Activated CD4-positive, alpha-beta T cell treated with anti-CD3 and anti-CD28 coated beads for 36 hours (primary cell): ENCODE measurements at regions of chr9 and their contacts with region 1.

Region 1: DNA sequence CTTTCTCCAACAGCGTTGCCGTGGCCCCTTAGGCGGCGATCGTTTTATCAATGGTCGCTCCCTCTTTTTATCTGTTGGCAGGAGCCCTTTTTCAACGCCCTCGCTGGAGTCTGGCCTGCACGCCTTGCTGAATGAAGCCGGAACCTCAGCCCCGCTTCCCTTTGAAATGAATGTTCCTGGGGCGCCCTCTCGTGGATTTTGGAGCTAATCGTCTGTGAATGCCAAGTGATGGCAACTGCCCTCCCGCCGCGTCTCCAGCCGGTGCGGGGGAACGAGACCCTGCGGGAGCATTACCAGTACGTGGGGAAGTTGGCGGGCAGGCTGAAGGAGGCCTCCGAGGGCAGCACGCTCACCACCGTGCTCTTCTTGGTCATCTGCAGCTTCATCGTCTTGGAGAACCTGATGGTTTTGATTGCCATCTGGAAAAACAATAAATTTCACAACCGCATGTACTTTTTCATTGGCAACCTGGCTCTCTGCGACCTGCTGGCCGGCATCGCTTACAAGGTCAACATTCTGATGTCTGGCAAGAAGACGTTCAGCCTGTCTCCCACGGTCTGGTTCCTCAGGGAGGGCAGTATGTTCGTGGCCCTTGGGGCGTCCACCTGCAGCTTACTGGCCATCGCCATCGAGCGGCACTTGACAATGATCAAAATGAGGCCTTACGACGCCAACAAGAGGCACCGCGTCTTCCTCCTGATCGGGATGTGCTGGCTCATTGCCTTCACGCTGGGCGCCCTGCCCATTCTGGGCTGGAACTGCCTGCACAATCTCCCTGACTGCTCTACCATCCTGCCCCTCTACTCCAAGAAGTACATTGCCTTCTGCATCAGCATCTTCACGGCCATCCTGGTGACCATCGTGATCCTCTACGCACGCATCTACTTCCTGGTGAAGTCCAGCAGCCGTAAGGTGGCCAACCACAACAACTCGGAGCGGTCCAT is 10.0 kb downstream of the S1PR3 start:
- DNase-seq: peak; percentile 92
- ATAC-seq: peak; percentile 71
- H3K4me3 Mint-ChIP-seq: no peak overlapping the region
- H3K27ac Mint-ChIP-seq: no peak overlapping the region
- H3K4me1 Mint-ChIP-seq: peaks cover 5% of the 10 kb centered on the region
- H3K27me3 Mint-ChIP-seq: peaks cover 16% of the 10 kb centered on the region

Region 2: DNA sequence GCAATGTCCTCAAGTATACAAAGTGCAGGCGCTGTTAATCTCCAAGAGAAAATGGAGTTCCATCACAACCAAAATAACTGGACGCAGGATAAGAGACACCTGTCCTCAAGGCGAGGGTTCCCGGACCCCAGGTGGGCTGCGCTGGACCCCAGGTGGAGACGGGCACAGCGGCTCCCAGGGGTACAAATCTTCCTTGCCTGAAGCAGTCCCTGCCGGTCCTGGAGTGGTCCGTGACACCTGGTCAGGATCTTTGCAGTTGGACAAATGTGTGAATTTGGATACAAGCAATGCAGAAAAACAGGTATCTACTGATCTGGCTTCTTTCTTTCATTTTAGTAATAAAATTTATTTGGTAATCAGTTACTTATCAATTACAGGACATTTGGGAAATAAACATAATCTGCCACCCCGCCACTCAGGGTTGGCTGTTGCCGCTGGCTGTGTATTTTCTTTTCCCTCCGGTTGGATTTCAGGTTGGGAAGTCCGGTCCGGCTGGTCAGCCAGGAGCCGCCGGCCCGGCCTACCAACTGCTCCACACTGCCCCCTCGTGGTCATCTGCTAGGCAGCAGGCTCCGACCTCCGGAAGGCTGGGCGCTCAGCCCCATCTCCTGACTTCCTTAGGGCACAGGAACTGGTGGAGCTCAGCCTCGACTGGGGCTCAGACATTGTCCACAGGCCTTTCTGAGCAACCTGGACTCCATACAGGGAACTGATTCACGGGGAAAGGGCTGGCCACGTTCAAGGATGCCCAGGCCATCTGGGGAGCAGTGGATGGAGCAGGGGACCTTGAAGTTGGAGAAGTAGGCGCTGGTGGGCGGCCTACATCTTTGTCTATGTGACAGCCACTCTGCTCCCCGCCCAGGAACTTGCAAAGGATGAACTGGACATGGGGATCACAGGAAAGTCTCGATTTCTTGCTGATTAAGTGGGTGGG is 422.9 kb before region 1 on chr9:
- CTCF ChIA-PET with region 1: no interaction called
- POLR2A ChIA-PET with region 1: no interaction called
- intact Hi-C with region 1: loop called in 1 of 2 experiments (anchors 5 kb)
- DNase-seq: peak; percentile 84
- ATAC-seq: peak; percentile 73
- H3K4me3 Mint-ChIP-seq: peak overlapping the region; percentile 31
- H3K27ac Mint-ChIP-seq: no peak overlapping the region
- H3K4me1 Mint-ChIP-seq: no peaks in the 10 kb centered on the region
- H3K27me3 Mint-ChIP-seq: peaks cover 13% of the 10 kb centered on the region

Region 3: GRCh38 chr9:88593537-88594185 is 407.6 kb before region 1 on chr9:
- CTCF ChIA-PET with region 1: interaction called, 8 read pairs
- POLR2A ChIA-PET with region 1: no interaction called
- intact Hi-C with region 1: loop called (anchors 1 kb)
- DNase-seq: peak; percentile 71
- ATAC-seq: peak; percentile 66
- H3K4me3 Mint-ChIP-seq: no peak overlapping the region
- H3K27ac Mint-ChIP-seq: no peak overlapping the region
- H3K4me1 Mint-ChIP-seq: peaks cover 6% of the 10 kb centered on the region
- H3K27me3 Mint-ChIP-seq: peaks cover 13% of the 10 kb centered on the region

Region 4: DNA sequence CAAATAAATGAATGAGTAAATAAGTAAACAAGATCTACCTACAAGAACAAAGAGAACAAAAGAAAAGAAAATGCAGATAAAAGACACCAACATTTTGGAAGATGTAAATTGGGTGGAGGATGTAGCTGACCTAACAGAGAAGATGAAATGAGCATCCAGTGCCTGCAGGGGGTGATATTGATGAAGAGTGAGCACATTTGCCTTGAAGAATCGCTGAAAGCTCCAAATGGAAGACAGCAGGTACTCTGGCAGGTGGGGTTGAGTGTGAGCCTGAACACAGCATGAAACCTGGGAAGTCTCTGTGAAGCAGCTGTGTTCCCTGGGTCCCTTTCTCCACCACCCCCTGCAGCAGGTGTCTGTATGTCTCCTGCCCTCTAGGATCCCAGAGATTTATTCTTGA is 340.6 kb before region 1 on chr9:
- CTCF ChIA-PET with region 1: interaction called, 3 read pairs
- POLR2A ChIA-PET with region 1: no interaction called
- intact Hi-C with region 1: loop called (anchors 1 to 10 kb)
- DNase-seq: peak; percentile 38
- ATAC-seq: no peak
- H3K4me3 Mint-ChIP-seq: no peak overlapping the region
- H3K27ac Mint-ChIP-seq: no peak overlapping the region
- H3K4me1 Mint-ChIP-seq: no peaks in the 10 kb centered on the region
- H3K27me3 Mint-ChIP-seq: peaks cover 8% of the 10 kb centered on the region

Region 5: GRCh38 chr9:88741335-88741734 is 259.9 kb before region 1 on chr9:
- CTCF ChIA-PET with region 1: no interaction called
- POLR2A ChIA-PET with region 1: no interaction called
- intact Hi-C with region 1: loop called in 1 of 2 experiments (anchors 5 kb)
- DNase-seq: peak; percentile 48
- ATAC-seq: no peak
- H3K4me3 Mint-ChIP-seq: no peak overlapping the region
- H3K27ac Mint-ChIP-seq: no peak overlapping the region
- H3K4me1 Mint-ChIP-seq: no peaks in the 10 kb centered on the region
- H3K27me3 Mint-ChIP-seq: peaks cover 33% of the 10 kb centered on the region